Activated CD4-positive, alpha-beta T cell treated with anti-CD3 and anti-CD28 coated beads, Interleukin-2, amount 10 ng/mL, durations not matched to agents 24 days and 14 days (primary cell): ENCODE measurements at regions of chr9 and their contacts with region 1.

Region 1: GRCh38 chr9:91131433-91131839 is 230.3 kb downstream of the AUH start:
- DNase-seq: peak; percentile 93
- H3K4me3 Mint-ChIP-seq: peak overlapping the region; percentile 69
- H3K27ac Mint-ChIP-seq: peak overlapping the region; percentile 93
- H3K4me1 Mint-ChIP-seq: peaks cover 45% of the 10 kb centered on the region
- H3K27me3 Mint-ChIP-seq: no peaks in the 10 kb centered on the region

Region 2: GRCh38 chr9:90385146-90385545 is 746.3 kb before region 1 on chr9:
- intact Hi-C with region 1: no loop called
- DNase-seq: no peak
- H3K4me3 Mint-ChIP-seq: no peak overlapping the region
- H3K27ac Mint-ChIP-seq: no peak overlapping the region
- H3K4me1 Mint-ChIP-seq: no peaks in the 10 kb centered on the region
- H3K27me3 Mint-ChIP-seq: peaks cover 16% of the 10 kb centered on the region

Region 3: GRCh38 chr9:91060503-91061343 is 70.7 kb before region 1 on chr9:
- intact Hi-C with region 1: loop called (anchors 1 kb)
- DNase-seq: peak; percentile 36
- H3K4me3 Mint-ChIP-seq: peak overlapping the region; percentile 7
- H3K27ac Mint-ChIP-seq: peak overlapping the region; percentile 89
- H3K4me1 Mint-ChIP-seq: peaks cover 36% of the 10 kb centered on the region
- H3K27me3 Mint-ChIP-seq: no peaks in the 10 kb centered on the region

Region 4: GRCh38 chr9:91071185-91071990 is 60.0 kb before region 1 on chr9:
- intact Hi-C with region 1: loop called (anchors 1 kb)
- DNase-seq: peak; percentile 84
- H3K4me3 Mint-ChIP-seq: peak overlapping the region; percentile 50
- H3K27ac Mint-ChIP-seq: peak overlapping the region; percentile 96
- H3K4me1 Mint-ChIP-seq: peaks cover 17% of the 10 kb centered on the region
- H3K27me3 Mint-ChIP-seq: no peaks in the 10 kb centered on the region

Region 5: GRCh38 chr9:91101611-91102168 is 29.7 kb before region 1 on chr9:
- intact Hi-C with region 1: loop called (anchors 1 kb)
- DNase-seq: peak; percentile 97
- H3K4me3 Mint-ChIP-seq: peak overlapping the region; percentile 70
- H3K27ac Mint-ChIP-seq: peak overlapping the region; percentile 89
- H3K4me1 Mint-ChIP-seq: peaks cover 67% of the 10 kb centered on the region
- H3K27me3 Mint-ChIP-seq: no peaks in the 10 kb centered on the region

Region 6: GRCh38 chr9:91207729-91208418 is 76.4 kb after region 1 on chr9:
- intact Hi-C with region 1: loop called (anchors 1 kb)
- DNase-seq: peak; percentile 83
- H3K4me3 Mint-ChIP-seq: peak overlapping the region; percentile 68
- H3K27ac Mint-ChIP-seq: peak overlapping the region; percentile 98
- H3K4me1 Mint-ChIP-seq: peaks cover 46% of the 10 kb centered on the region
- H3K27me3 Mint-ChIP-seq: no peaks in the 10 kb centered on the region

Region 7: DNA sequence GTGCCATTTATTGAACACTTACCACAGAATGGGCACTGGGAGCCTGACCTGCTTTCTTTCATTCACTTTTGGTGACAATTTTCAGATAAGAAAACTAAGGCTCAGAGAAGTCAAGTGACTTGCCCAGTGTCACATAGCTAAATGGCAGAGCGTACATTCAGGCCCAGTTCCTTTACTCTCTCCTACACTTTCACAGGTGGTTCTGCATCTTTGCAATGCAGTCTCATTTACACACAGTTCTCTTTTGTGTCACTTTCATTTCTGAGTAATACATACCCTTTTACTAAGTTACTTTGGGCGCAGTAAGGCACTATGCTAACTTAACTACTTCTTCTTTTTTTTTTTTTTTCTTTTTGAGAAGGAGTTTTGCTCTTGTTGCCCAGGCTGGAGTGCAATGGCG is 283.9 kb after region 1 on chr9:
- intact Hi-C with region 1: loop called (anchors 1 kb)
- DNase-seq: peak; percentile 69
- H3K4me3 Mint-ChIP-seq: peak overlapping the region; percentile 63
- H3K27ac Mint-ChIP-seq: peak overlapping the region; percentile 86
- H3K4me1 Mint-ChIP-seq: peaks cover 79% of the 10 kb centered on the region
- H3K27me3 Mint-ChIP-seq: no peaks in the 10 kb centered on the region